ENCODE measurements at regions of chr4 and their contacts with region 1.

Region 1: GRCh38 chr4:6250235-6250983 is 19.2 kb upstream of the WFS1 start:
- DNase-seq: no peak
- H3K4me3 ChIP-seq: no peak overlapping the region
- CTCF ChIP-seq: peak; percentile 51

Region 2: DNA sequence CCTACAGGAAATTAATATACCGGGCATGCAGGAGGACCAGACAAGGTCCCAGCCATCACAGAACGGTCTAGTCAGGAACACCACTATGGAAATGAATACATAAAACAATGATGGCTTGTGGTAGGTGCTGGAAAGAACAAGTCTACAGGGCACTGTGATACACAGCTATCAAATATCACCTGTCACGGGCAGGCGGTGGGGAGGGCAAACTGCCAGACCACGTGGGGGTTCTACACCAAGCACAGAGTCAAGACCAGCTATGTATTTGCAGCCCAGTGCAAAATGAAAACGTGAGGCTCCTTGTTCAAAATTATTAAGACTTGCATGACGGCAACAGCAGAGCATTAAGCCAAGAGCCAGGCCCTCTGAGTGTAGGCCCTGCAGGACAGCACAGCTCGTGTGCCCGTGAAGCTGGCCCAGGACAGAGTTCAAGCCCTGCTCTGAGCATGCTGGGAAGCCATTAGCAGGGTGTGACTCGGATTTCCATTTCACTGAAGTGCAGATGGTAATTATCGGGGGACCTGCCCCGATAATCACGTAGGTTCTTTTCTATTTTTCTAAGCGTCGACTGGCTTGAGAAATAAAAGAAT is 133.6 kb before region 1 on chr4:
- CTCF ChIA-PET with region 1: no interaction called
- POLR2A ChIA-PET with region 1: no interaction called
- DNase-seq: no peak
- H3K4me3 ChIP-seq: no peak overlapping the region
- CTCF ChIP-seq: no peak

Region 3: DNA sequence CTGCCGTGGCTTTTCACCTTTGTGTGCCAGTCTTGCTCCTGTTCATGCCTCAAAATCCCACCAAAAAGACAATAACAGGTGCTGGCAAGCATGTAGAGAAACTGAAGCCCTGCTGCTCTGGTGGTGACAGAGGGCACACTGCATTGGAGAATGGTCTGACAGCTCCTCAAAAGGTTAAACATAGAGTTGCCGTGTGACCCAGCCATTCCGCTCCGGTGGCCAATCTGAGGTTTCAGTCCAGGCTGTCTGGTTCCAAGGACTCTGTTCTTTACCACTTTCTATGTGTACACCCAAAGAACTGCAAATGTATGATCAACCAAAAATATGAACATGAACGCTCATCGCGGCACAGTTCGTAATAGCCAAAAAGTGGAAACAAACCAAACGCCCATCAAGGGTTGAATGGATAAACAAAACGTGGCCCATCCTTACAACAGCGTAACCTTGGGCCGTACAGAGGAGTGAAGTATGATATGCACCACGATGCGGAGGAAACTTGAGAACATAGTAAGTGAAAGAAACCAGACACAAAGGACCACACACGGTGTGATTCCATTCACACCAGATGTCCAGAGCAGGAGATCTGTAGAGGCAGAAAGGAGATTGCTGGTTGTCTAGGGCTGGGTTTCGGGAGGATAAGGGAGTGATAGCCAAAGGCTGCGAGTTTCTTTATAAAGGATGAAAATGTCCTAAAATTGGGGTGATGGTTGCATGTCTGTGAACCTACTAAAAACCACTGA is 14.3 kb before region 1 on chr4:
- CTCF ChIA-PET with region 1: interaction called, 11 read pairs
- POLR2A ChIA-PET with region 1: no interaction called
- DNase-seq: no peak
- H3K4me3 ChIP-seq: no peak overlapping the region
- CTCF ChIP-seq: no peak

Region 4: GRCh38 chr4:6269616-6270511 is 19.5 kb after region 1 on chr4 and contains the start of gene WFS1:
- CTCF ChIA-PET with region 1: interaction called, 211 read pairs
- POLR2A ChIA-PET with region 1: interaction called, 3 read pairs
- DNase-seq: peak; percentile 83
- H3K4me3 ChIP-seq: peak within 1 kb of the TSS; percentile 87
- CTCF ChIP-seq: no peak

Region 5: GRCh38 chr4:6278801-6279197 is 28.4 kb after region 1 on chr4:
- CTCF ChIA-PET with region 1: interaction called, 11 read pairs
- POLR2A ChIA-PET with region 1: no interaction called
- DNase-seq: no peak
- H3K4me3 ChIP-seq: no peak overlapping the region
- CTCF ChIP-seq: no peak

Region 6: GRCh38 chr4:6343950-6344408 is 93.6 kb after region 1 on chr4:
- CTCF ChIA-PET with region 1: interaction called, 28 read pairs
- POLR2A ChIA-PET with region 1: no interaction called
- DNase-seq: peak; percentile 19
- H3K4me3 ChIP-seq: no peak overlapping the region
- CTCF ChIP-seq: no peak